Left lung (tissue), 14 donors: ENCODE measurements at regions of chr9 and their contacts with region 1.

Region 1: GRCh38 chr9:21789541-21790037 is 12.8 kb upstream of the MTAP start:
- DNase-seq: peak in 2 of 4 donors; percentile 66 to 85
- ATAC-seq: peak; percentile 98
- H3K4me3 ChIP-seq: no peak overlapping the region
- H3K27ac ChIP-seq: no peak overlapping the region
- H3K4me1 ChIP-seq: peaks cover 0 to 6% of the 10 kb centered on the region in 2 donors
- H3K27me3 ChIP-seq: peaks cover 9 to 20% of the 10 kb centered on the region in 2 donors
- CTCF ChIP-seq: peak; percentile 68 to 81

Region 2: DNA sequence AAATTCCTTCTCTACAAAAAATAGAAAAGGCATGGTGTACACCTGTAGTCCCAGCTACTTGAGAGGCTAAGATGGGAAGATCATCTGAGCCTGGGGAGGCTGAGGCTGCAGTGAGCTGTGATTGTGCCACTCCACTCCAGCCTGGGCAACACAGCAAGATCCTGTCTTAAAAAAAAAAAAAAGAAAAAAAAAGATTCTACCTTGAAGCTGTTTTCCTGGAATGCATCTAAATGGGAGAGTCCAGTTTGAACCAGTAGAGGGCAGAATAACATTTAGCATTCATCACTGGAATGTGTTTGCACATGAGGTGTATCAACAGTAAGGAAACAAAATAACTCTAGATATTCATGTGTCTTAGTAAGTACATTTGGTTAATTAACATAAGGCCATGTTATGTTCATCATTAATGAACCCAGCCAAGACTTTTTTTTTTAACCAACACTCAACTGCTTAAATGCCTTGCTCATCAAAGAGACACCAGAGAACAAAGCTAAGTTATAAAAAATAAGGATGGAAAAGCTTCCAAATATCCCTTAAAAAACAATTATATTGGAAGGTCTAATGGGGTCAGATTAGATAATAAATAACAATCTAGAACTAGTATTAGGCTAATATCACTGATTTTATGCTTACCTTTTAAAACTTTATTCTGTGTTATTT is 323.6 kb before region 1 on chr9:
- intact Hi-C with region 1: loop called in 1 of 2 experiments (anchors 10 kb)
- DNase-seq: peak in 2 of 4 donors; percentile 3 to 26
- ATAC-seq: peak; percentile 84
- H3K4me3 ChIP-seq: no peak overlapping the region
- H3K27ac ChIP-seq: no peak overlapping the region
- H3K4me1 ChIP-seq: no peaks in the 10 kb centered on the region
- H3K27me3 ChIP-seq: no peaks in the 10 kb centered on the region
- CTCF ChIP-seq: peak; percentile 61 to 64

Region 3: GRCh38 chr9:21709464-21710058 is 80.0 kb before region 1 on chr9:
- intact Hi-C with region 1: loop called in 1 of 2 experiments (anchors 10 kb)
- DNase-seq: peak in 3 of 4 donors; percentile 18 to 33 (median 32)
- ATAC-seq: peak; percentile 92
- H3K4me3 ChIP-seq: no peak overlapping the region
- H3K27ac ChIP-seq: no peak overlapping the region
- H3K4me1 ChIP-seq: no peaks in the 10 kb centered on the region
- H3K27me3 ChIP-seq: peaks cover 8 to 49% of the 10 kb centered on the region in 2 donors
- CTCF ChIP-seq: peak; percentile 79 to 84

Region 4: DNA sequence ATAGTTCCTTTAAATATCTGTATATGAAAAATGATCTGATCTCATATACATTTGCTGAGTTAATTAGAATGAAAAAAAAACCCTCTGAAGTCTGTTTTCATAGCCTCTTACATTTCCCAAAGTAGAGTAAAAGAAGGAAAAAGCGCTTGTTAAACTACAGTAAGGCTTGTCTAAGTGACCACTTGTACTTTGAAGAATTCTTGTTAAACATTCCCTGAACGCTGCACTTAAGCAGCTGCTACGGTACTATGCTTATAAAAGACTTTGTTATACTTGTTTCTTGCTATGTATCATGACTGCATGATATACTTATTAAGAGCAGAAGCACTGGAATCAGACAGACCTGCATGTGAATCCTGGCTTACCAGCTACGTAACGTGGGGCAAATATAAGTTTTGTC is 68.8 kb before region 1 on chr9:
- intact Hi-C with region 1: no loop called
- DNase-seq: peak in 2 of 4 donors; percentile 1 to 31
- ATAC-seq: peak; percentile 73
- H3K4me3 ChIP-seq: no peak overlapping the region
- H3K27ac ChIP-seq: no peak overlapping the region
- H3K4me1 ChIP-seq: no peaks in the 10 kb centered on the region
- H3K27me3 ChIP-seq: peaks cover 36 to 87% of the 10 kb centered on the region in 2 donors
- CTCF ChIP-seq: no peak

Region 5: DNA sequence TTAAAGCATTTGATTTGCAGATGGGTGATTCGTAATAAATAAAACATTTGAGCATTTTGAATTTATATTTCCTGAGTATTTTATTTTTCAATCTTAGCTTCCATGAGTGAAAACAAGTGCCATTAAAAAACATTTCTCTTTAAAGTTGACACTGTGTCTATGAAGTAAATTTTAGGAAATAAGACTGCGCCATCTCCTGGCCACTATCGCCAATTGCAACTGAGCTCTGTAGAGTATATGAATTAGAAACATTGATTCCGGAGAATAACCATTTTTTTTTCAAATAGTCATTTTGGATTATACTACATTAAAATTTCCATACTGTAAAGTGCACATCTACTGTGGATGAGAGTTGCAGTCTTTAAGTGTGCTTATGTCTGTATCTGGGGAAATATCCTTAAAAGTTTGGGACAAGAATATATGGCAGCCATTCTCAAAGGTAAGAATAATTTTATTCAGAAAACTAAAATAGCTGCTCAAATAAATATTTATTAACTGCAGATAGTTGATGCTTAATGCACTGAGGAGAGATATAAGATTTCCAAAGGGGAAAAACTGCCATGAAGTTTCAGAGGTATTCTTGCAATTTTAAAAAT is 662.9 kb after region 1 on chr9:
- intact Hi-C with region 1: no loop called
- DNase-seq: no peak
- ATAC-seq: peak; percentile 46
- H3K4me3 ChIP-seq: no peak overlapping the region
- H3K27ac ChIP-seq: no peak overlapping the region
- H3K4me1 ChIP-seq: no peaks in the 10 kb centered on the region
- H3K27me3 ChIP-seq: peaks cover 0 to 33% of the 10 kb centered on the region in 2 donors
- CTCF ChIP-seq: peak; percentile 69 to 76